GM12878 (cell line): ENCODE measurements at regions of chr2 and their contacts with region 1.

Region 1: GRCh38 chr2:19863303-19864041 is 38.3 kb downstream of the TTC32 start:
- DNase-seq: no peak
- ATAC-seq: peak; percentile 91
- H3K4me3 ChIP-seq: no peak overlapping the region
- H3K27ac ChIP-seq: no peak overlapping the region
- H3K4me1 ChIP-seq: peaks cover 9% of the 10 kb centered on the region
- H3K27me3 ChIP-seq: no peaks in the 10 kb centered on the region; a peak in 1 of 4 replicates
- CTCF ChIP-seq: peak; percentile 83 to 98 (median 93)
- EP300 ChIP-seq: no peak
- POLR2A ChIP-seq: no peak
- RAD21 ChIP-seq: peak; percentile 81

Region 2: GRCh38 chr2:18387441-18388206 is 1475.8 kb before region 1 on chr2:
- CTCF ChIA-PET with region 1: no interaction called
- POLR2A ChIA-PET with region 1: no interaction called
- RAD21 ChIA-PET with region 1: no interaction called
- SMC1A ChIA-PET with region 1: no interaction called
- in situ Hi-C with region 1: no loop called
- intact Hi-C with region 1: loop called (anchors 5 kb)
- DNase-seq: peak; percentile 23
- ATAC-seq: peak; percentile 97
- H3K4me3 ChIP-seq: no peak overlapping the region
- H3K27ac ChIP-seq: no peak overlapping the region
- H3K4me1 ChIP-seq: no peaks in the 10 kb centered on the region
- H3K27me3 ChIP-seq: peaks cover 0 to 1% of the 10 kb centered on the region in 2 experiments; a peak in 1 of 4 replicates
- CTCF ChIP-seq: peak; percentile 84 to 94 (median 93)
- EP300 ChIP-seq: no peak
- POLR2A ChIP-seq: no peak
- RAD21 ChIP-seq: peak; percentile 54

Region 3: DNA sequence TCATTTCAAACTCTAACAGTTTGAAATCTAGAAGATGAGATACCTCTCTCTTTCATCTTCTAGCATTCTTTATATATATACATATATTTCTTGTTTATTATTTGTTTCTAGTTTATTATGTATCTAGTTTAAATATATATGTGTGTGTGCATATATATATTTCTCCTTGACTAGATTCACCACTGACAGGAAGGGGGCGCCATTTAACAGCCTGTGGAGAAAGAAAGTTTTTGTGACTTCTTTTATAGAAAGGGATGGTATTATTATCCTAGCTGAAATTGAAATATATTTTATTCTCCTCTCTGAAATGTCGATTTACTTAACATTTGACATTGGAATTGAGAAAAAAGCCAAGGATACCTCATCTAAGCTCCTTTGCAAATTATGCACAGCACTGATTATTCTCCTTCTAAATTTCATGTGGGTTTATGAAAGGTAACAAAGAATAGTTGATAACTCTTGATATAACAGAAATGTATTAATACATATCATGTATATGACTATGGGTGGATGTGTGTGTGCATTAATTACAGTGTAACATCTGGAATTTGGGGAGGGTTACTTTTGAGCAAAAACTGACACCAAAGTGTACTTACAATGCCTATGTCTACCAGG is 1113.5 kb before region 1 on chr2:
- CTCF ChIA-PET with region 1: interaction called, 7 read pairs
- POLR2A ChIA-PET with region 1: no interaction called
- RAD21 ChIA-PET with region 1: no interaction called
- SMC1A ChIA-PET with region 1: no interaction called
- in situ Hi-C with region 1: loop called (anchors 10 kb)
- intact Hi-C with region 1: loop called (anchors 2 kb)
- DNase-seq: no peak
- ATAC-seq: peak; percentile 56
- H3K4me3 ChIP-seq: no peak overlapping the region
- H3K27ac ChIP-seq: no peak overlapping the region
- H3K4me1 ChIP-seq: no peaks in the 10 kb centered on the region
- H3K27me3 ChIP-seq: no peaks in the 10 kb centered on the region
- CTCF ChIP-seq: peak; percentile 43 to 69 (median 46); a peak in 5 of 6 replicates
- EP300 ChIP-seq: no peak
- POLR2A ChIP-seq: no peak
- RAD21 ChIP-seq: peak; percentile 89

Region 4: DNA sequence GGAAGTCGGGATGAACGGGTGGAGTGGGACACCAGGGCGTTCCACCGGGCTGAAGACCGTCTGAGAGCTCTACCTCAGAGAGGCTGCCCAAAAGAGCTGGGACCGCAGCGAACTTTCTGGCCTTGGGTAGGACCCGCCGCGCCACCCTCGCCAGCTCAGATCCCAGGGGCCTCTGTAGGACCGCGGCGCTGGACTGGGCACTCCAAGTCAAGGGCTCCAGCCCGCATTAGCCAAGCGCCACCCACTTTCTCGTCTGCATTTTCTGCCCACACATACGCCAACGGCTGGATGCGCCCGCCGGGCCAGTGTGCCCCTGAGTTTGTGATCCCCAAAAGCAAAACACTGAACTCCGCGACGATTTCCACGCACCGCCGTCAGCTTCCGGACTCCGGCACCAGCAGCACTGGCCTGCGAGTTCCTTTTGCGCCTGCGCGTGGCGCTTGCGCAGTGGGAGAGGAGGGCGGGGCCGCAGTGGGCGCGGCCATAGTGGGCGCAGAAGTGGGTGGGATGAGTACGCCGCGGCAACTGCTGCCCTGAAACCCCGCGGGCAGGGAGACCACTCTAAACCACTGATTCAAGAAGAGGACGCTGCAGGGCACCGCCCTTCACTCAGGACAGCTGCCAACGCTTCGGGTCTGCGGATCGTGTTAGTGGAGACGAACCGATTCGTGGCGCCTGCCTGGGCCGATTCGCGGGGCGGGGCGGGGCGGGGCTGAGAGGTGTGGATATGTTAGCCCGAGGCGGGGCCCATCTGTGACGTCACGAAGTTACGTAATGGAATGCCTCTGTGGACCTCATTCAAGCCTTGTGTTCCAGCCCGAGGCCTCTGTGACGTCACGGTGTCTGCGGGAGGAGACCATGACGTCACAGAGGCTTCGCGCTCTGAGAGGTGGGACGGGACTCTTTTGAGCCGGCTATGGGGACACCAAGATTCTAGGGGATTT is 515.6 kb before region 1 on chr2:
- CTCF ChIA-PET with region 1: interaction called, 4 read pairs
- POLR2A ChIA-PET with region 1: no interaction called
- RAD21 ChIA-PET with region 1: interaction called, 3 read pairs
- SMC1A ChIA-PET with region 1: no interaction called
- in situ Hi-C with region 1: loop called (anchors 5 kb)
- intact Hi-C with region 1: no loop called
- DNase-seq: peak; percentile 86
- ATAC-seq: peak; percentile 95
- H3K4me3 ChIP-seq: peak overlapping the region; percentile 89
- H3K27ac ChIP-seq: peak overlapping the region; percentile 91
- H3K4me1 ChIP-seq: peaks cover 6% of the 10 kb centered on the region
- H3K27me3 ChIP-seq: peaks cover 4 to 10% of the 10 kb centered on the region in 2 experiments
- CTCF ChIP-seq: no peak
- EP300 ChIP-seq: no peak
- POLR2A ChIP-seq: peak; percentile 99
- RAD21 ChIP-seq: no peak

Region 5: GRCh38 chr2:19545507-19545906 is 318.0 kb before region 1 on chr2:
- CTCF ChIA-PET with region 1: interaction called, 3 read pairs
- POLR2A ChIA-PET with region 1: no interaction called
- RAD21 ChIA-PET with region 1: no interaction called
- SMC1A ChIA-PET with region 1: interaction called, 3 read pairs
- in situ Hi-C with region 1: no loop called
- intact Hi-C with region 1: loop called (anchors 1 kb)
- DNase-seq: no peak
- ATAC-seq: peak; percentile 79
- H3K4me3 ChIP-seq: no peak overlapping the region
- H3K27ac ChIP-seq: no peak overlapping the region
- H3K4me1 ChIP-seq: no peaks in the 10 kb centered on the region
- H3K27me3 ChIP-seq: no peaks in the 10 kb centered on the region; a peak in 1 of 4 replicates
- CTCF ChIP-seq: peak in 2 of 3 experiments; percentile 18 to 30; a peak in 3 of 6 replicates
- EP300 ChIP-seq: no peak
- POLR2A ChIP-seq: no peak
- RAD21 ChIP-seq: peak; percentile 44

Region 6: DNA sequence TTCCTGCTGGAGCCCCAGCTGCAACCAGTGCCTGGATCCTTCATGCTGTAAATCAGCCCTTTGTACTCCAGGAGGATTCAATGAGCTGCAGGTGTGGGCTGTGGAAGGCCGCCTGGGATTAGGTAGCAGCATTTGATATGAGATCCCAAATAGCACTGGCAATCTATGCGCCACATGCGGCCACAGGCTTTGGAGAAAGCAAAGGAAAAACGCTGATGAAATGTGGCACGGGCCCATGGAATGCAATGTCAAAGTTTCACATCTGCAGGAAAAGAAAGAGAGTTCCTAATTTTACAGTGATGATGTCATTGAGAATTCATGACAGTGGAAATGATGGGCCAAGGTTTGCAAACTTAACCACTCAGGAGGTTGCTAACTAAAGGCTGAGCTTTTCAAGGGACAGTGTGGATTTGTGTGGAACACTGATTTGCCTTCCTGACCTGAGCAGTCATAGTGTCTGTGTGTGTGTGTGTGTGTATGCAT is 288.7 kb before region 1 on chr2:
- CTCF ChIA-PET with region 1: no interaction called
- POLR2A ChIA-PET with region 1: no interaction called
- RAD21 ChIA-PET with region 1: no interaction called
- SMC1A ChIA-PET with region 1: no interaction called
- in situ Hi-C with region 1: no loop called
- intact Hi-C with region 1: no loop called
- DNase-seq: no peak
- ATAC-seq: no peak
- H3K4me3 ChIP-seq: no peak overlapping the region
- H3K27ac ChIP-seq: no peak overlapping the region
- H3K4me1 ChIP-seq: no peaks in the 10 kb centered on the region
- H3K27me3 ChIP-seq: no peaks in the 10 kb centered on the region; a peak in 1 of 4 replicates
- CTCF ChIP-seq: no peak
- EP300 ChIP-seq: no peak
- POLR2A ChIP-seq: no peak
- RAD21 ChIP-seq: no peak

Region 7: GRCh38 chr2:19769513-19769912 is 94.0 kb before region 1 on chr2:
- CTCF ChIA-PET with region 1: interaction called, 4 read pairs
- POLR2A ChIA-PET with region 1: no interaction called
- RAD21 ChIA-PET with region 1: interaction called, 4 read pairs
- SMC1A ChIA-PET with region 1: no interaction called
- in situ Hi-C with region 1: no loop called
- intact Hi-C with region 1: loop called (anchors 2 kb)
- DNase-seq: no peak
- ATAC-seq: no peak
- H3K4me3 ChIP-seq: no peak overlapping the region
- H3K27ac ChIP-seq: no peak overlapping the region
- H3K4me1 ChIP-seq: no peaks in the 10 kb centered on the region
- H3K27me3 ChIP-seq: peaks cover 0 to 2% of the 10 kb centered on the region in 2 experiments; a peak in 1 of 4 replicates
- CTCF ChIP-seq: peak; percentile 9 to 24 (median 14); a peak in 2 of 6 replicates
- EP300 ChIP-seq: no peak
- POLR2A ChIP-seq: no peak
- RAD21 ChIP-seq: no peak

Region 8: DNA sequence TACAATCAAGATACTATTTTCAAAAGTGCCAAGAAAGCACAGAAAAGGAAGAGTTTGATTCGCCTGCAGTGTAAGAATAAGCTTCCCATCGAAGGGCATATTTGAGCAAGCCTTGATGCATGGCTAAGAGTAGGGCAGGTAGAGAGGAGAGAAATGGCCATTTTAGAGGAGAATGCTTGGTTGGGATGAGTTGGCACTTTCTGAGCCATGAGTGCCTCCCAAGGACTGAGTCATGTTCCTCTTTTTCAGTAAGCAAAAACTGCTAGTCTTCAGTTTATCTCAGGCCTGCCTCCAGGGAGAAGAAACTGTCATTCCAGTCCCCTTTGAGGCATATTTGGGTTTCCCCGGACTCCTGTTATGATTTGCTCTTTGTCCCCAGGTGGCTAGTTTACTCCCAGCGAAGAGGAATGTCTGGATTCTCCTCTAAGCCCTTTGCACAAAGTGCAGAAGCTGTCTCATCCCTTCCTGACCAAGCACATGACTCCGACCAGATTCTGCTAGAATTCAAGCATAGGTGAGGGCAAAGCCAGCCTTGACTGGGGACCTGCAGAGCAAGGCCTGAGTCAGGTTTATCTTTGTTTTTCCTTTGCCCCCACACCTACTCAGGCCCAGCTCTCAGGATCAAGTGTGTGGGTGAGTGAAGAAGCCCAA is 76.9 kb before region 1 on chr2:
- CTCF ChIA-PET with region 1: no interaction called
- POLR2A ChIA-PET with region 1: no interaction called
- RAD21 ChIA-PET with region 1: no interaction called
- SMC1A ChIA-PET with region 1: no interaction called
- in situ Hi-C with region 1: no loop called
- intact Hi-C with region 1: no loop called
- DNase-seq: no peak
- ATAC-seq: peak; percentile 63
- H3K4me3 ChIP-seq: no peak overlapping the region
- H3K27ac ChIP-seq: no peak overlapping the region
- H3K4me1 ChIP-seq: no peaks in the 10 kb centered on the region; the same call in 1 of the 2 replicates
- H3K27me3 ChIP-seq: no peaks in the 10 kb centered on the region; a peak in 1 of 4 replicates
- CTCF ChIP-seq: no peak
- EP300 ChIP-seq: no peak
- POLR2A ChIP-seq: no peak
- RAD21 ChIP-seq: no peak